ENCODE measurements at regions of chr14 and their contacts with region 1.

Region 1: GRCh38 chr14:32593290-32593942 is 264.3 kb downstream of the AKAP6 start:
- DNase-seq: no peak
- H3K4me3 ChIP-seq: no peak overlapping the region
- H3K27ac ChIP-seq: peak overlapping the region in 1 of 2 donors; percentile 12
- H3K4me1 ChIP-seq: no peaks in the 10 kb centered on the region
- H3K27me3 ChIP-seq: no peaks in the 10 kb centered on the region
- CTCF ChIP-seq: no peak
- POLR2A ChIP-seq: no peak

Region 2: GRCh38 chr14:32319362-32320049 is 273.9 kb before region 1 on chr14:
- intact Hi-C with region 1: no loop called
- DNase-seq: no peak
- H3K4me3 ChIP-seq: no peak overlapping the region
- H3K27ac ChIP-seq: no peak overlapping the region
- H3K4me1 ChIP-seq: no peaks in the 10 kb centered on the region
- H3K27me3 ChIP-seq: no peaks in the 10 kb centered on the region
- CTCF ChIP-seq: no peak
- POLR2A ChIP-seq: no peak

Region 3: GRCh38 chr14:33508126-33509062 is 915.0 kb after region 1 on chr14:
- intact Hi-C with region 1: loop called (anchors 10 kb)
- DNase-seq: no peak
- H3K4me3 ChIP-seq: no peak overlapping the region
- H3K27ac ChIP-seq: peak overlapping the region in 1 of 2 donors; percentile 27
- H3K4me1 ChIP-seq: peaks cover 0 to 4% of the 10 kb centered on the region in 2 donors
- H3K27me3 ChIP-seq: no peaks in the 10 kb centered on the region
- CTCF ChIP-seq: no peak
- POLR2A ChIP-seq: no peak